ENCODE measurements at regions of chr13 and their contacts with region 1.

Region 1: DNA sequence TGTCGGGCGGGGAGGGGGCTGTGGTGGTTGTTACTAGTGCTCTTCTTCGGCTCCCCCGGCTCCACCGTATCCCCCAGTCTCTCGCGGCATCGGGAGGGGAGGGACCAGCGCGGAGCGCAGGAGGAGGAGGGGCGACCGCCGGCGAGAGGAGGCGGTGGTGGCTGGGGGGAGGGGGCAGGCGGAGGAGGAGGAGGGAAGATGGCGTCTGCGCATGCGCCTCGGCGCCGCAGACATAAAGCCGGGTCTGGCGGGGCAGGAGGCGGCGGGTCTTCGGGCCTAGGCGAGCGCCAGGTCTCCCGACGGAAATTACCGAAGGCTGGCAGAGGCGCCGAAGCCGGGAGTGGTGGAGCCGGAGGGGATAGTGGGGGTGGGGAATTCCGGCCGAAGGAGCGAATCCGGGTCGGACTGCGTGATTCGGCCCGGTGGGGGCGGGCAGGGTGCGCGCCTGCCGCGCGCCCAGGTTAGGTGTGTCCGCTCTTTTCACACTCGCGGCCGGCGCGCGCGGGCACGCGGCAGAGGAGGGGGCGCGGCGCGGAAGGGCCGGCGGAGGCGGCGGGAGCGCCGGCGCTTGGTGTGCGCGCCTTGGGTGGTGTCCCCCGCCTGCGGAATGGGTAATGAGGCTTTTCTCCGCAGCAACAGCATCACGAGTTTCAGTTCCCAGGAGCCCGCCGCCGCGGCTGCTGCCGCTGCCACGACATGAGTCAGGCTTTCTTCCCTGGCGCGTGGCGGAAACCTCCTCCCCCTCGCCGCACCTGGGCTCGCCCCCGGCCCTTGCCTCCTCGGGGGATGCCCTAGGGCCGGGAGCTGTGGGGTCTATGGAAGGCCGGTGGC is 1.3 kb upstream of the TSC22D1 start:
- DNase-seq: peak; percentile 95 to 98
- H3K4me3 ChIP-seq: peak overlapping the region; percentile 87 to 98
- H3K27ac ChIP-seq: peak overlapping the region; percentile 98
- H3K4me1 ChIP-seq: peaks cover 0 to 41% (median 23%) of the 10 kb centered on the region in 4 donors
- H3K27me3 ChIP-seq: no peaks in the 10 kb centered on the region
- CTCF ChIP-seq: no peak

Region 2: DNA sequence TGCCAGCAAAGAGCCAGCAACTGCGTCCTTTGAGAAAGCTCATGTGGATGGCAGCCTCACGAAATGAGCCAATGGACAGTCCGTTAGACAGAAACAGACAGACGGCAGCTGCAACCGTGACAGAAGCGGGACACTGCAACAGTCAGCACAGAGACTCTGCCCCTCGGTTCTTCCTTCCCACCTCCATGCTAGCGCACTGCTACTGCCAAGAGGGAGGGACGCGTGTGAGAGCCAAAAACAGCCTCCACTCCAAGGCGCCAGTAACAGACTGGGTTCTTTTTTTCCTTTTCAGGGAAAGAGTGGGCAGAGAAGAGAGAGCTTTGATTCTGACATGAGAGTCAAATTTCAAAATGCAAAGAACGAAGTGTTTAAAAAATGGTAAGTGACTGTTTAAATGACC is 126.3 kb before region 1 on chr13:
- intact Hi-C with region 1: no loop called
- DNase-seq: no peak
- H3K4me3 ChIP-seq: no peak overlapping the region
- H3K27ac ChIP-seq: peak overlapping the region; percentile 45 to 54
- H3K4me1 ChIP-seq: peaks cover 0 to 30% (median 10%) of the 10 kb centered on the region in 4 donors
- H3K27me3 ChIP-seq: no peaks in the 10 kb centered on the region
- CTCF ChIP-seq: no peak

Region 3: DNA sequence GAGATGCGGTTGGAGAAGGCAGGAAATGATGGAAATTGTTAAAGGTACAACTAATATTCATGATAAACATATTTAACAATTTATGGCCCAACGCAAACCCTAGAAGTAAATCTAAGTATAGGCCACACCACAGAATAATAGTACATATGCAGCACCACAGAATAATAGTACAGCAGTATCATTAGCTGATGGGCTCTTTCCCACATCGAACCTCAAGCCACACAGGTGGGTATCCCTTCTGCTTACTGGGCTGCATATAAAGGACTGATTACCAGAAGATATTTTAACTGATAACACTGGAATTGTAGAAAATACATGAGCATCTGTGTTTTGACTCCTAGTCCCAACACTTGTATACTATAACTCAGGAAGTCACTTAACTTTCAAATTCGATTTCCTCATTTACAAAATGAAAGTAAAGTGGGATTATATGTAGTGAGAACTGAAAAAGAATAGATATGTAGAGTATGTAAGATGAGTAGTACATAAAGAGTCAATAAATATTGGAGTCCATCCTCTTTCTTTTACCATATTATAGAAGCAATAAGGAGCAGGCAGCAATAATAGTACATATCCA is 92.8 kb before region 1 on chr13:
- intact Hi-C with region 1: loop called (anchors 10 kb)
- DNase-seq: no peak
- H3K4me3 ChIP-seq: no peak overlapping the region
- H3K27ac ChIP-seq: peak overlapping the region in 1 of 2 donors; percentile 15
- H3K4me1 ChIP-seq: peaks cover 0 to 41% (median 4%) of the 10 kb centered on the region in 4 donors
- H3K27me3 ChIP-seq: no peaks in the 10 kb centered on the region
- CTCF ChIP-seq: no peak

Region 4: GRCh38 chr13:44498969-44499368 is 78.5 kb before region 1 on chr13:
- intact Hi-C with region 1: no loop called
- DNase-seq: no peak
- H3K4me3 ChIP-seq: no peak overlapping the region
- H3K27ac ChIP-seq: no peak overlapping the region
- H3K4me1 ChIP-seq: peaks cover 0 to 17% (median 3%) of the 10 kb centered on the region in 4 donors
- H3K27me3 ChIP-seq: no peaks in the 10 kb centered on the region
- CTCF ChIP-seq: no peak

Region 5: DNA sequence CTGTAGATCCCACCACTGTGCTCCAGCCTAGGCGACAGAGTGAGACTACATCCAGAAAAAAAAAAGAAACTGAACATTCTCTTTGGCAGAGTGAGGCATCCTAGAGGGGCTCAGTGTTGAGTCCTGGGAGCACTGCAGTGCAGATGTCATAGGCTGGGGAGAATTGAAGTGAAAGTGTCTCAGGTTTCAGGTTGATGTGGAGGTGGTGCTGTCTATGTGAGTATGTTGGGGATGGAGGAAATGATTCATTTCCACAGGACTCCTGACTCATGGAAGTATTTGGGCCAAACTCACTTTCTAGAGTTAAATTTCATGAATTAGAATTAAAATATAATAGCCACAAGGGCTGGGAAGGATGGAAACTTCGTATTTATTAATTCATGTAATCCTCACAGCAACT is 133.1 kb after region 1 on chr13:
- intact Hi-C with region 1: loop called (anchors 10 kb)
- DNase-seq: no peak
- H3K4me3 ChIP-seq: no peak overlapping the region
- H3K27ac ChIP-seq: peak overlapping the region; percentile 71 to 75
- H3K4me1 ChIP-seq: peaks cover 0 to 68% (median 42%) of the 10 kb centered on the region in 4 donors
- H3K27me3 ChIP-seq: no peaks in the 10 kb centered on the region
- CTCF ChIP-seq: no peak

Region 6: DNA sequence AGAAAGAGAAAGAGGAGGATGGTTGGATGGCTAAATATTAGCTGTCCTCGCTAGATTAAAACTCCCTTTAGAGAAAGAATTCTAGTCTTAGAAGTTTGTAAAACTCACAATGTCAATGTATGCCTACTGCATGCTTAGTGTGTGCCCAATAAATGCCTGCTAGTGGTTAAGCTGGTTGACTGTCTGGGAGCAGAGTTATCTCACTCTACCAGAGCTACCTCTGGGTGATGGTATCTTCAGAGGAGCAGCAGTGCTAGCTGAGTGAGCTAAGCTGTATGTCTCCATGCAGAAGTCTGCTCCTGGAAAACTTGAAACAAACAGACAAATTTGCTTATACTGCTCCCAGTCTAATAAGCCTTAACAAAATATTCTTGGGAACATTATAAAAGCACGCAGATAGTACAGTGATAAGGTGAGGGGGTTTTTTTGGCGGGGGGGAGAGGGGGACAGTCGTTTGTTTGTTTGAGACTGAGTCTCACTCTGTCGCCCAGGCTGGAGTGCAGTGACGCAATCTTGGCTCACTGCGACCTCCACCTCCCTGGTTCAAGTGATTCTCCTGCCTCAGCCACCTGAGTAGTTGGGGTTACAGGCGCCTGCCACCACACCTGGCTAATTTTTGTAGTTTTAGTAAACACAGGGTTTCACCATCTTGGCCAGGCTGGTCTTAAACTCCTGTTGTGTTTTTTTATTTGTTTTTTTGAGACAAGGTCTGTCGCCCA is 201.5 kb after region 1 on chr13:
- intact Hi-C with region 1: no loop called
- DNase-seq: no peak
- H3K4me3 ChIP-seq: no peak overlapping the region
- H3K27ac ChIP-seq: no peak overlapping the region
- H3K4me1 ChIP-seq: no peaks in the 10 kb centered on the region
- H3K27me3 ChIP-seq: no peaks in the 10 kb centered on the region
- CTCF ChIP-seq: no peak

Region 7: GRCh38 chr13:44904967-44905366 is 327.5 kb after region 1 on chr13:
- intact Hi-C with region 1: loop called (anchors 10 kb)
- DNase-seq: peak in 1 of 2 donors; percentile 52
- H3K4me3 ChIP-seq: no peak overlapping the region
- H3K27ac ChIP-seq: peak overlapping the region; percentile 77 to 78
- H3K4me1 ChIP-seq: peaks cover 0 to 59% (median 45%) of the 10 kb centered on the region in 4 donors
- H3K27me3 ChIP-seq: no peaks in the 10 kb centered on the region
- CTCF ChIP-seq: no peak

Measured in tibial artery (tissue), 4 donors.